Esophagus muscularis mucosa (tissue), 4 donors: ENCODE measurements at regions of chr16 and their contacts with region 1.

Region 1: GRCh38 chr16:69396187-69397061 is 10.6 kb upstream of the TERF2 start:
- DNase-seq: no peak
- H3K4me3 ChIP-seq: peak overlapping the region in 1 of 4 donors; percentile 6
- H3K27ac ChIP-seq: peak overlapping the region; percentile 77 to 84 (median 80)
- H3K4me1 ChIP-seq: peaks cover 19 to 31% (median 26%) of the 10 kb centered on the region in 4 donors
- H3K27me3 ChIP-seq: no peaks in the 10 kb centered on the region
- CTCF ChIP-seq: peak; percentile 73 to 82 (median 81)
- EP300 ChIP-seq: no peak
- POLR2A ChIP-seq: no peak

Region 2: GRCh38 chr16:69435977-69436820 is 39.8 kb after region 1 on chr16:
- intact Hi-C with region 1: no loop called
- DNase-seq: no peak
- H3K4me3 ChIP-seq: no peak overlapping the region
- H3K27ac ChIP-seq: peak overlapping the region in 1 of 4 donors; percentile 3
- H3K4me1 ChIP-seq: peaks cover 14 to 22% (median 17%) of the 10 kb centered on the region in 4 donors
- H3K27me3 ChIP-seq: no peaks in the 10 kb centered on the region
- CTCF ChIP-seq: no peak
- EP300 ChIP-seq: no peak
- POLR2A ChIP-seq: no peak

Region 3: DNA sequence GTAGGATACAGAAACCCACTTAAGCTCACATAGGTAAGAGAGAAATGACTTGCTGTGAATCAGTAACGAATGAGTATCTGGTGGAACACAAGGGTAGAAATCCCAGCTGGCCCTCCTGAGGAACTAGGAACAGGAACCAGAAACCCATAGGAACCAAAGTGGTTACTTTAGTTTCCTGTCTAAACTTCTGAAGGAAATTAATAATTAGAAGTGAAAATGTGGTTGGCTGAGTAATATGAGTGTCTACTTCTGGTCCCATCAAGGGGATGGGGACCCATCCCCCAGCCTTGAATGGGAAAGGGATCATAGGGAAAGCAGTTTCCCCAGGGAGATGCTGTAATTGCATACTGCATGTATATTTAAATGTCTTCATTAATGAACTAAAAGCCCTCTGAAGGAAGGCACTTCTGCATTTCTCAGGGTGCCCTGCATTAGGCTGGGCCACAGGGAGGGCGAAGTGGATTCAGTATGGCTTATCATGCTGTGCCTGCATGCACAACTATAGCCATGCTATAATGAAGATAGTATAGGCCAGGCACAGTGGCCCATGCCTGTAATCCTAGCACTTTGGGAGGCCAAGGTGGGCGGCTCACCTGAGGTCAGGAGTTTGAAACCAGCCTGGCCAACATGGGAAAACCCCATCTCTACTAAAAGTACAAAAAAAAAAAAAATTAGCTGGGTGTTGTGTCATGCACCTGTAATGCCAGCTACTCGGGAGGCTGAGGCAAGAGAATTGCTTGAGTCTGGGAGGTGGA is 73.6 kb after region 1 on chr16:
- intact Hi-C with region 1: no loop called
- DNase-seq: no peak
- H3K4me3 ChIP-seq: no peak overlapping the region
- H3K27ac ChIP-seq: no peak overlapping the region
- H3K4me1 ChIP-seq: peaks cover 0 to 9% (median 0%) of the 10 kb centered on the region in 4 donors
- H3K27me3 ChIP-seq: no peaks in the 10 kb centered on the region
- CTCF ChIP-seq: no peak
- EP300 ChIP-seq: no peak
- POLR2A ChIP-seq: no peak

Region 4: DNA sequence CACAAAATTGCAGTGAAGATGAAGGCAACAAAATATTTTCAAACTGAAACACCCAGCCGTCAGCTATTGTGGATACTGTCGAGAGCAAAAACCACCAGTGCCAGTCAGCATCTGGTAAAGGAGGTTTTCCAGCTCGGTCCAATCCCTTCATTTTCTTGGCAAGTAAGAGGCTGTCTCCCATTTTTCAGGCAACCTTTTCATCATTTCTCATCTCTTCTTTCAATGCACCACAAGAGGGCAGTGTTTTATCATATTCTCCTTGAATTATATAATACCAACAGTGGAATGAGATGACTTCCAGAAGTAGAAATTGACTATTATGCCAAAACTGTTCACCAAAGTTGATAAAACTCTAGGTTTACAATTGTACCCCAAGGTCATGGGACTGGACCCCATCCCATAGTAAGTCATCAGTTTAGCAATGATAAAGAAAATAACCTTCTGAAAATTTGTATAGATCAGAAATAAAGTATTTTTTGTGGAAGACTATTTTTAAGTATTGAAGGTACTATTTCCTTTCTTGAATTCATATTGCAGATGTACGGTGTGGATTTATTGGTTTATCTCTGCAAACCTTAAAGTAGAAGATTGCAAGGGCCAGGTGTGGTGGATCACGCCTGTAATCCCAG is 313.1 kb after region 1 on chr16:
- intact Hi-C with region 1: loop called (anchors 5 kb)
- DNase-seq: peak; percentile 57
- H3K4me3 ChIP-seq: no peak overlapping the region
- H3K27ac ChIP-seq: peak overlapping the region; percentile 16 to 50 (median 34)
- H3K4me1 ChIP-seq: peaks cover 6 to 52% (median 48%) of the 10 kb centered on the region in 4 donors
- H3K27me3 ChIP-seq: no peaks in the 10 kb centered on the region
- CTCF ChIP-seq: peak; percentile 68 to 80 (median 69)
- EP300 ChIP-seq: no peak
- POLR2A ChIP-seq: no peak

Region 5: DNA sequence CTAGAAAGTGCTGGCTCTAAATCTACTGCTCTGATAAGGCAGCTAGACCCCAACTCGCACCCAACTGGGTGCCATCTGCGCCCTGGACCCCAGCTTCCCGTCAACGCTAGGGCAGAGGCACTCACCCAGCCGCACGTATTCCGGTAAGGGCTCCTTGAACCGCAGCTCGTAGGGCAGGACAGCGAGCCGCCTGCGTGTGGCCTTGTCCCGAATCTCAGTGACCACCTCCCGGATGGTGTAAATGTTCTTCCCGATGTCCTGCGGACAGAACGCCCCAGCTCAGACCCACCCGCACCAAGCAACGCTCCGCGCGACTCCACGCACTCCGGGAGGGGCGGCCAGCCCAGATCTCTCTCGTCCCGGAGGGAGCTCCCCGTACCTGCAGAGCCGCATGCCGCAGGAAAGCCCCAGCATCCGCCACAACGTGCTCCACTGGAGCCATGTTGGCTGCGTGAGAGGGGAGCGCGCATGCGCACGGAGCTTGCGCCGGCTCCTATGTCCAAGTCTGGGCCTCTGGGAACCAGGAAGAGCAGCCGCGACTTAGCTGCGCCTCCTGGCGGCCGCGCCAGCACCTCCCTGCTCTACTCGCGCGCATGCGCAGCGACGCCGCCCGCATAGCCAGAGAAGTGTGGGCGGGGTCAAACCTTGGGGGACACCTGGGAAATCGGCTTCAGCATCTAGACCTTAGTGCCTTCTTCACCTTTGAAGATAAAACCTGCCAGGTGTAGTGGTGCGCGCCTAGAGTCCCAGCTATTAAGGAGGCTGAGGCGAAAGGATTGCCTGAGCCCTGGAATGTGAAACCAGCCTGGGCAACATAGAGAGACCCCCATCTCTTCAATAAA is 358.3 kb after region 1 on chr16 and contains the start of gene NOB1:
- intact Hi-C with region 1: loop called (anchors 2 kb)
- DNase-seq: peak; percentile 98
- H3K4me3 ChIP-seq: peak within 1 kb of the TSS; percentile 81 to 90 (median 82)
- H3K27ac ChIP-seq: peak within 1 kb of the TSS; percentile 72 to 84 (median 75)
- H3K4me1 ChIP-seq: peaks cover 18 to 31% (median 22%) of the 10 kb centered on the region in 4 donors
- H3K27me3 ChIP-seq: no peaks in the 10 kb centered on the region
- CTCF ChIP-seq: peak in 2 of 3 experiments; percentile 99 to 100
- EP300 ChIP-seq: no peak
- POLR2A ChIP-seq: peak; percentile 31
- total RNA-seq, gene NOB1: 22.4 to 39.2 (median 30.3) TPM